MCF 10A (cell line): ENCODE measurements at regions of chr10 and their contacts with region 1.

Region 1: GRCh38 chr10:77649333-77650331 is 12.0 kb upstream of the KCNMA1 start:
- DNase-seq: no peak
- H3K4me3 Mint-ChIP-seq: no peak overlapping the region
- H3K27ac Mint-ChIP-seq: no peak overlapping the region
- H3K4me1 Mint-ChIP-seq: peaks cover 5% of the 10 kb centered on the region
- H3K27me3 Mint-ChIP-seq: no peaks in the 10 kb centered on the region
- CTCF ChIP-seq: no peak

Region 2: GRCh38 chr10:77692782-77693181 is 43.1 kb after region 1 on chr10:
- CTCF ChIA-PET with region 1: interaction called, 4 read pairs
- POLR2A ChIA-PET with region 1: no interaction called
- intact Hi-C with region 1: loop called (anchors 2 kb)
- DNase-seq: peak; percentile 48
- H3K4me3 Mint-ChIP-seq: no peak overlapping the region
- H3K27ac Mint-ChIP-seq: no peak overlapping the region
- H3K4me1 Mint-ChIP-seq: peaks cover 5% of the 10 kb centered on the region
- H3K27me3 Mint-ChIP-seq: no peaks in the 10 kb centered on the region
- CTCF ChIP-seq: no peak